ENCODE measurements at regions of chr16 and their contacts with region 1.

Region 1: GRCh38 chr16:30805370-30806169 is 18.6 kb upstream of the ZNF629 start:
- DNase-seq: peak; percentile 88 to 90
- ATAC-seq: peak; percentile 86 to 91
- H3K4me3 ChIP-seq: peak overlapping the region; percentile 81 to 87 (median 83)
- H3K27ac ChIP-seq: peak overlapping the region; percentile 91 to 95 (median 92)
- H3K4me1 ChIP-seq: peaks cover 14 to 17% of the 10 kb centered on the region in 2 donors
- H3K27me3 ChIP-seq: no peaks in the 10 kb centered on the region
- CTCF ChIP-seq: peak in 1 of 5 experiments; percentile 11
- POLR2A ChIP-seq: peak; percentile 92 to 94

Region 2: GRCh38 chr16:30786936-30787612 is 18.5 kb before region 1 on chr16 and contains the start of gene ZNF629:
- in situ Hi-C with region 1: no loop called
- intact Hi-C with region 1: loop called (anchors 1 kb)
- DNase-seq: peak in 1 of 2 donors; percentile 62
- ATAC-seq: peak; percentile 73 to 78
- H3K4me3 ChIP-seq: peak within 1 kb of the TSS; percentile 73 to 95 (median 87)
- H3K27ac ChIP-seq: peak within 1 kb of the TSS; percentile 80 to 95 (median 91)
- H3K4me1 ChIP-seq: peaks cover 15 to 18% of the 10 kb centered on the region in 2 donors
- H3K27me3 ChIP-seq: no peaks in the 10 kb centered on the region
- CTCF ChIP-seq: peak in 2 of 5 experiments; percentile 10 to 11
- POLR2A ChIP-seq: no peak
- total RNA-seq, gene ZNF629: 9.1 to 12.7 (median 10.3) TPM

Region 3: GRCh38 chr16:30874821-30875717 is 69.5 kb after region 1 on chr16:
- in situ Hi-C with region 1: no loop called
- intact Hi-C with region 1: loop called (anchors 1 kb)
- DNase-seq: peak; percentile 77 to 84
- ATAC-seq: peak; percentile 99
- H3K4me3 ChIP-seq: peak overlapping the region; percentile 84 to 97 (median 94)
- H3K27ac ChIP-seq: peak overlapping the region; percentile 86 to 96 (median 87)
- H3K4me1 ChIP-seq: peaks cover 17 to 22% of the 10 kb centered on the region in 2 donors
- H3K27me3 ChIP-seq: no peaks in the 10 kb centered on the region
- CTCF ChIP-seq: peak in 1 of 5 experiments; percentile 6
- POLR2A ChIP-seq: peak; percentile 65 to 69

Region 4: GRCh38 chr16:30885196-30885595 is 79.6 kb after region 1 on chr16:
- in situ Hi-C with region 1: no loop called
- intact Hi-C with region 1: no loop called
- DNase-seq: no peak
- ATAC-seq: no peak
- H3K4me3 ChIP-seq: no peak overlapping the region
- H3K27ac ChIP-seq: no peak overlapping the region
- H3K4me1 ChIP-seq: no peaks in the 10 kb centered on the region
- H3K27me3 ChIP-seq: no peaks in the 10 kb centered on the region
- CTCF ChIP-seq: no peak
- POLR2A ChIP-seq: no peak

Region 5: DNA sequence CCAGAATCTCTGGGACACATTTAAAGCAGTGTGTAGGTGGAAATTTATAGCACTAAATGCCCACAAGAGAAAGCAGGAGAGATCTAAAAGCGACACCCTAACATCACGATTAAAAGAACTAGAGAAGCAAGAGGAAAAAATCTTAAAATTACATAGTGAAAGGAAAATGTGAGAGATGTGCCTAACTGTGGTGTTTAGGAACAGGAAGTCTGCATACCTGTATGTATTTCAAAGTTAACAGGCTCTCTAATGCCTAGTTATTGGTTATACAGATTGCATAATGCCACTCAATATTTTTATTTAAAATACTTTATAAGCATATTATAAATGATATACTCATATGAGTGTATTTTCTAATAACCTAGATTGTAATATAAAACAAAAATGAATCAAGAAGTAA is 1093.9 kb after region 1 on chr16:
- in situ Hi-C with region 1: no loop called
- intact Hi-C with region 1: no loop called
- DNase-seq: no peak
- ATAC-seq: no peak
- H3K4me3 ChIP-seq: no peak overlapping the region
- H3K27ac ChIP-seq: no peak overlapping the region
- H3K4me1 ChIP-seq: no peaks in the 10 kb centered on the region
- H3K27me3 ChIP-seq: no peaks in the 10 kb centered on the region
- CTCF ChIP-seq: no peak
- POLR2A ChIP-seq: no peak